ENCODE measurements at regions of chr10 and their contacts with region 1.

Region 1: GRCh38 chr10:95691281-95691680 is 2.4 kb downstream of the TCTN3 start:
- DNase-seq: no peak
- H3K4me3 ChIP-seq: no peak overlapping the region
- H3K27ac ChIP-seq: no peak overlapping the region
- H3K4me1 ChIP-seq: peaks cover 33% of the 10 kb centered on the region
- H3K27me3 ChIP-seq: no peaks in the 10 kb centered on the region
- CTCF ChIP-seq: no peak

Region 2: GRCh38 chr10:95767884-95768556 is 76.7 kb after region 1 on chr10:
- intact Hi-C with region 1: no loop called
- DNase-seq: peak; percentile 25
- H3K4me3 ChIP-seq: no peak overlapping the region
- H3K27ac ChIP-seq: peak overlapping the region; percentile 20
- H3K4me1 ChIP-seq: no peaks in the 10 kb centered on the region
- H3K27me3 ChIP-seq: no peaks in the 10 kb centered on the region
- CTCF ChIP-seq: no peak

Region 3: GRCh38 chr10:95837783-95838182 is 146.5 kb after region 1 on chr10:
- intact Hi-C with region 1: loop called (anchors 2 kb)
- DNase-seq: no peak
- H3K4me3 ChIP-seq: no peak overlapping the region
- H3K27ac ChIP-seq: no peak overlapping the region
- H3K4me1 ChIP-seq: peaks cover 23% of the 10 kb centered on the region
- H3K27me3 ChIP-seq: no peaks in the 10 kb centered on the region
- CTCF ChIP-seq: no peak

Measured in left ventricle myocardium inferior (tissue), 1 donor.